CD8-positive, alpha-beta memory T cell (primary cell): ENCODE measurements at regions of chr6 and their contacts with region 1.

Region 1: DNA sequence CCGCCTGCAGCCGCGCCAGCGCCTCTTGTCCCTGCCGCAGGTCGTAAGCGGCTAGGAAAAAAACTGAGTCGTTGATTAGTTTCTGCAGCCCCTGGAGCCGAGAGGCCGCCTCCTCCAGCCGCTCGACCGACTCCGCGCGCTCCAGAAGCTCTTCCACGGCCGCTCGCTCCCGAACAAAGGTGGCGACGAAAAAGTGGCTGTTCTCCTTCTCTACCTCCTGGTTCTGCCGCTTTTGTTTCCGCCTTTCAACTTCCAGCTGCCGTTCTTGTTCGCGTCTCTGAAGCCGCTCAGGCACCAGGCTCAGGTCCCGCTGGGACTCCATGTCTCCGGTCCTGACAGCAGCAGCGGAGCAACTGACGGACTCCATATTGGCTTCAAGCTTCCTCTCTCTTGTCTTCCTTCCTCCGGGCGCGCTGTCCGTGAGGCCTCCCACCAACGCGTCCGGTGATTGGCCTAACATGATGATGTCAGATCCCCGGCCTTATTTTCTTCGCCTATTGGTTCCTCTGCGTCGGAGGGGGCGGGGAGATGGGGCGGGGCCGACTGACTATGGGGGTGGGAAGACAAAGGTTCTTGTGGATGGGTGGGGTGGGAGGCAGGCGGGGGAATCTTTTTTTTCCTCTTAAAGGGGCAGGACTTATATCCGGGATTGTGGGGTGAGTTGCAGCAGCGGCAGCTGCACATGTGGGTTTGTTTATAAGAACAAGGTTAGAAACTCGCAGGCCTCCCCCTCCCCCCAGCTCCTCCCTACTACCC is at the start of gene TBCC:
- DNase-seq: peak; percentile 90 to 98 (median 92)
- H3K4me3 ChIP-seq: peak within 1 kb of the TSS; percentile 99
- H3K4me3 Mint-ChIP-seq: peak within 1 kb of the TSS; percentile 93 to 100 (median 100)
- H3K27ac ChIP-seq: peak within 1 kb of the TSS; percentile 99
- H3K27ac Mint-ChIP-seq: peak within 1 kb of the TSS; percentile 90 to 100 (median 100)
- H3K4me1 ChIP-seq: peaks cover 33% of the 10 kb centered on the region
- H3K4me1 Mint-ChIP-seq: peaks cover 26 to 45% (median 39%) of the 10 kb centered on the region in 3 donors
- H3K27me3 ChIP-seq: no peaks in the 10 kb centered on the region
- H3K27me3 Mint-ChIP-seq: no peaks in the 10 kb centered on the region
- total RNA-seq, gene TBCC: 24.4 to 26.4 TPM

Region 2: DNA sequence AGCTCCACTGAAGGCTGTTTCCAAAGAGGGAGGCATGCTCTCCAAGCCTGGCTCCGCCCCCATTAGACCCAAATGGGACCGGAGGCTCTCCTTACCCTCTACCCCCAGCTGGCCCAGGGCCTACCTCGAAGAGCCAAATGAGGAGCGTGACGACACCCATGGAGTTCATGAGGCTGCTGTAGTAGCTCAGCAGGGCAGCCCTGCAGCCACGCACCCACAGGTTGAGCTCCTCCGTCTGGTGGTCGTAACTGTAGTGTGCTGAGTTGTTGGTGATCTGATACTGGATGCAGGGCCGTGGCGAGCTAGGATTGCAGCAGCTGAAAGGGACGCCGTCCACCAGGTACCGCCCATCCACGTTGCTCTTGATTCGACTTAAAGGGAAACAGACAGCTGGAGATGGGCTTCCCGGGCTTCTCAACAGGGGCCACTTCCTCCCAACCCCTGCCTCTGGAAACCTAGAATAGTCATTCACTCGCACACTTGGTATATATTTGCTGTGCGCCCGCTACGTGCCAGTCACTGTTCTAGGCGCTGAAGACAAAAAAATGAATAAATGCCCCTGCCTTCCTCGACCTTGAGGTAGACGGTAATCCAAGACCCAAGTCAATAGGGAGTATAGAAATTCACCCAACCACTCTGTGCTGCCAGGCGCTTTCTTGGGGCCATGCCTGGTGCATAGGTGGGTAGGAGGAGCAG is 41.5 kb before region 1 on chr6:
- CTCF ChIA-PET with region 1: no interaction called
- POLR2A ChIA-PET with region 1: no interaction called
- DNase-seq: no peak
- H3K4me3 ChIP-seq: no peak overlapping the region
- H3K4me3 Mint-ChIP-seq: no peak overlapping the region
- H3K27ac ChIP-seq: no peak overlapping the region
- H3K27ac Mint-ChIP-seq: no peak overlapping the region
- H3K4me1 ChIP-seq: no peaks in the 10 kb centered on the region
- H3K4me1 Mint-ChIP-seq: no peaks in the 10 kb centered on the region
- H3K27me3 ChIP-seq: no peaks in the 10 kb centered on the region
- H3K27me3 Mint-ChIP-seq: peaks cover 0 to 5% of the 10 kb centered on the region in 2 donors

Region 3: GRCh38 chr6:42766141-42766670 is 20.3 kb after region 1 on chr6:
- CTCF ChIA-PET with region 1: interaction called, 48 read pairs
- POLR2A ChIA-PET with region 1: interaction called, 281 read pairs
- DNase-seq: no peak
- H3K4me3 ChIP-seq: no peak overlapping the region
- H3K4me3 Mint-ChIP-seq: no peak overlapping the region
- H3K27ac ChIP-seq: no peak overlapping the region
- H3K27ac Mint-ChIP-seq: peak overlapping the region in 6 of 8 donors; percentile 4 to 91 (median 44)
- H3K4me1 ChIP-seq: peaks cover 20% of the 10 kb centered on the region
- H3K4me1 Mint-ChIP-seq: peaks cover 36 to 61% (median 48%) of the 10 kb centered on the region in 3 donors
- H3K27me3 ChIP-seq: no peaks in the 10 kb centered on the region
- H3K27me3 Mint-ChIP-seq: peaks cover 0 to 1% of the 10 kb centered on the region in 2 donors

Region 4: DNA sequence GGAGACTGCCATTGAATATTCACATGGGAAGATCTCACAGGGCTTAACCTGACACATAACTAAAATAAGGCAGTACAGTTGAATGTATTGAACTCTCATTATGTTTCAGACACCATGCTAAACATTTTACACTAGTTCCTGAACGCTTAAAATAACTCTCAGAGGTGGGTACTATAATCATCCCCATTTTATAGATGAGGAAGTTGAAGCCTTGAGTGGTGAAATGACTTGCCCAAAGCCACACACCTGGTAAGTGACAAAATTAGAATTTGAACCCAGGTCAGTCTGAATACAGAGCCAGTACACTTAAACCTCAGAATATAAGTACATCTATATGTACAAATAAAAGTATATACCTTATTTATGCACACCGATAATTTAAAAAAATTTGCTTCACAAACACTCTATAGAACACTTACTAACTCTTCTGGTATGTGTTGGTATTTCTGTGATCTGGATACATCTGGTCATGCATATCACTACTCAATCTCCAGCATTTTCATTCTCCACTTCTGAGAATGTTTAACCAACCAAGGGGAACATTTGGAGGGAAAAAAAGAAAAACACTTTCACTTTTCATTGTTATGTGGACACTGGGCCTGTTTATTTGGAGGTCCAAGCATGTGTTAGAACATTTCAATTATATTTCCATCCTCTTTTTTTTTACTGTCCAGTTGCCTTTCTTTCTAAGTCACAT is 31.4 kb after region 1 on chr6:
- CTCF ChIA-PET with region 1: interaction called, 65 read pairs
- POLR2A ChIA-PET with region 1: interaction called, 415 read pairs
- DNase-seq: no peak
- H3K4me3 ChIP-seq: no peak overlapping the region
- H3K4me3 Mint-ChIP-seq: peak overlapping the region in 5 of 7 donors; percentile 13 to 62 (median 30)
- H3K27ac ChIP-seq: no peak overlapping the region
- H3K27ac Mint-ChIP-seq: peak overlapping the region in 7 of 8 donors; percentile 62 to 87 (median 84)
- H3K4me1 ChIP-seq: peaks cover 78% of the 10 kb centered on the region
- H3K4me1 Mint-ChIP-seq: peaks cover 57 to 80% (median 80%) of the 10 kb centered on the region in 3 donors
- H3K27me3 ChIP-seq: no peaks in the 10 kb centered on the region
- H3K27me3 Mint-ChIP-seq: peaks cover 0 to 2% of the 10 kb centered on the region in 2 donors

Region 5: GRCh38 chr6:42790549-42791181 is 44.8 kb after region 1 on chr6:
- CTCF ChIA-PET with region 1: interaction called, 65 read pairs
- POLR2A ChIA-PET with region 1: interaction called, 415 read pairs
- DNase-seq: no peak
- H3K4me3 ChIP-seq: no peak overlapping the region
- H3K4me3 Mint-ChIP-seq: peak overlapping the region in 6 of 7 donors; percentile 3 to 60 (median 12)
- H3K27ac ChIP-seq: no peak overlapping the region
- H3K27ac Mint-ChIP-seq: peak overlapping the region; percentile 16 to 93 (median 84)
- H3K4me1 ChIP-seq: peaks cover 55% of the 10 kb centered on the region
- H3K4me1 Mint-ChIP-seq: peaks cover 2 to 39% (median 33%) of the 10 kb centered on the region in 3 donors
- H3K27me3 ChIP-seq: no peaks in the 10 kb centered on the region
- H3K27me3 Mint-ChIP-seq: no peaks in the 10 kb centered on the region

Region 6: DNA sequence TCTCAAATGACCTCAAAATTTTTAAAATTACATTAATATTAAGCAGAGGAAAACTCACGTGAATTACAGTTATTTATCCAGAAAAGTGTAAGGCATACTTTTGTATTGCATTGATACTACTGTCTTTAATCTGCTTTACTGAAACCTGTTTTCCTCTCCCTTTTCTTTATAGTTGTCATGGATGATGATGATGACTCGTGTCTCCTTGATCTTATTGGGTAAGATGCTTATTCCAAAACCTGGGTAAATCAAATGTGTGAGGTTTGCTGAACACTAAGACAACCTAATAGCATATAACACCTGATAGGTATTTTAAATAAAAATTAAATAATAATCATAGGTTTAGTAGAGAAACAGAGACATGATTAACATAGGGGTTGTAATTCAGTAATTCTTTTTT is 76.0 kb after region 1 on chr6:
- CTCF ChIA-PET with region 1: no interaction called
- POLR2A ChIA-PET with region 1: no interaction called
- DNase-seq: no peak
- H3K4me3 ChIP-seq: no peak overlapping the region
- H3K4me3 Mint-ChIP-seq: no peak overlapping the region
- H3K27ac ChIP-seq: no peak overlapping the region
- H3K27ac Mint-ChIP-seq: peak overlapping the region in 3 of 8 donors; percentile 47 to 73 (median 60)
- H3K4me1 ChIP-seq: peaks cover 15% of the 10 kb centered on the region
- H3K4me1 Mint-ChIP-seq: peaks cover 27 to 43% (median 41%) of the 10 kb centered on the region in 3 donors
- H3K27me3 ChIP-seq: no peaks in the 10 kb centered on the region
- H3K27me3 Mint-ChIP-seq: no peaks in the 10 kb centered on the region

Region 7: DNA sequence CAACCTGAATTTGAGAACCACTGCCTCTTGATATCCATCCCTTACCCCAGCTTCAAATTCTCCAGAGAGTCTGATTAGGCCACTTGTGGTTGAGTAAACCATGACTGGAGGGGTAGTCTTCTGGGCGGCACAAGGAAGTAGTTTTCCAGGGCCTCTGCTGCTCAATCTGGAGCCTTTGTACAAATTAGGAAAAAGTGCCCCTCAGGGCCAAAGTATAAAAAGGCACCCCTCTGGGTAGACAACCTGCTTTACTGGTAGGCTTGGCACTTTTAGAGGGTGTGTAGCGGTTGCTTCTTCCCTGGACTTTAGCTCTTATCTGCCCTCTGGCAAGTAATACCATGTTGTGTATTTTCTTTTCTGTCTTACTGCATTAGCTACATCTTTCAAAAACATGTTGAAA is 100.6 kb after region 1 on chr6:
- CTCF ChIA-PET with region 1: no interaction called
- POLR2A ChIA-PET with region 1: no interaction called
- DNase-seq: no peak
- H3K4me3 ChIP-seq: no peak overlapping the region
- H3K4me3 Mint-ChIP-seq: no peak overlapping the region
- H3K27ac ChIP-seq: no peak overlapping the region
- H3K27ac Mint-ChIP-seq: peak overlapping the region in 1 of 8 donors; percentile 73
- H3K4me1 ChIP-seq: no peaks in the 10 kb centered on the region
- H3K4me1 Mint-ChIP-seq: peaks cover 9 to 24% (median 13%) of the 10 kb centered on the region in 3 donors
- H3K27me3 ChIP-seq: no peaks in the 10 kb centered on the region
- H3K27me3 Mint-ChIP-seq: peaks cover 0 to 1% of the 10 kb centered on the region in 2 donors

Region 8: GRCh38 chr6:42928986-42929820 is 183.3 kb after region 1 on chr6 and contains the start of gene CNPY3:
- CTCF ChIA-PET with region 1: no interaction called
- POLR2A ChIA-PET with region 1: interaction called, 13 read pairs
- DNase-seq: peak; percentile 90 to 97 (median 95)
- H3K4me3 ChIP-seq: peak within 1 kb of the TSS; percentile 78
- H3K4me3 Mint-ChIP-seq: peak within 1 kb of the TSS; percentile 97 to 100 (median 99)
- H3K27ac ChIP-seq: peak within 1 kb of the TSS; percentile 91
- H3K27ac Mint-ChIP-seq: peak within 1 kb of the TSS; percentile 97 to 100 (median 99)
- H3K4me1 ChIP-seq: peaks cover 45% of the 10 kb centered on the region
- H3K4me1 Mint-ChIP-seq: peaks cover 46 to 51% (median 50%) of the 10 kb centered on the region in 3 donors
- H3K27me3 ChIP-seq: no peaks in the 10 kb centered on the region
- H3K27me3 Mint-ChIP-seq: peaks cover 0 to 2% of the 10 kb centered on the region in 2 donors
- total RNA-seq, gene CNPY3: 53.1 to 55.8 TPM

Region 9: GRCh38 chr6:43673444-43674084 is 927.7 kb after region 1 on chr6:
- CTCF ChIA-PET with region 1: no interaction called
- POLR2A ChIA-PET with region 1: no interaction called
- DNase-seq: no peak
- H3K4me3 ChIP-seq: no peak overlapping the region
- H3K4me3 Mint-ChIP-seq: no peak overlapping the region
- H3K27ac ChIP-seq: no peak overlapping the region
- H3K27ac Mint-ChIP-seq: peak overlapping the region in 2 of 8 donors; percentile 46 to 55
- H3K4me1 ChIP-seq: no peaks in the 10 kb centered on the region
- H3K4me1 Mint-ChIP-seq: peaks cover 0 to 3% (median 0%) of the 10 kb centered on the region in 3 donors
- H3K27me3 ChIP-seq: no peaks in the 10 kb centered on the region
- H3K27me3 Mint-ChIP-seq: no peaks in the 10 kb centered on the region